ENCODE measurements at regions of chr17 and their contacts with region 1.

Region 1: DNA sequence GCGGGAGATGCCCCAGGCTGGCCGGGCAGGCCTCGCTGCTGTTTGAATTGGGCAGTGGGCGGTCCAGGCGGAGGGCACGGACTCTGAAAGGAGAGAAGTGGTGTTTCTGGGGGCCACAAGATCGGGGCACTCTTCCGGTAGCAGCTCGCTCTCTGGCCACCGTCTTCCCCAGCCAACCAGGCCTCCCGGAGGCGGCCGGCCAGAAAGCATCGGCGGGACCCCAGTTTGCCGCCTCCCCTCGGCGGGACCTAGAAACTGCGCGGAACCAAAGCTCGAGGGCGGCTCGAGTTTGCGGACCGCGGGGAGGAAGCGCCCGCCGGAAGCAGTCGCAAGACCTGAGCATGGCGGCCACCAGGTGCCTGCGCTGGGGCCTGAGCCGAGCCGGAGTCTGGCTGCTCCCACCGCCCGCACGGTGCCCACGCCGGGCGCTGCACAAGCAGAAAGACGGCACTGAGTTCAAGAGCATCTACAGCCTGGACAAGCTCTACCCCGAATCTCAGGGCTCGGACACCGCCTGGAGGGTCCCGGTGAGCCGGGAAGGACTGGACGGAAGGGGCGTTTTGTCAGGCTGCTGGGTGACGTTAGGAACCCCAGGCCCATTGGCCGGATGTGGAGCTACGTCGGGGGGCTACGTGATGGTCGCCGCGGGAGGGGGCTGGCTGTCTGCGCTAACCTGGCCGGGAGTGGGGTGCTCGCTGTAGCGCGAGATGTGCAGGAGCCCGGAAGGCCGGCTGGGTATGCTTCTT is at the start of gene MRPL58:
- DNase-seq: peak; percentile 62 to 90 (median 75)
- ATAC-seq: peak; percentile 97
- H3K4me3 ChIP-seq: peak within 1 kb of the TSS; percentile 95
- H3K4me3 Mint-ChIP-seq: peak within 1 kb of the TSS; percentile 96
- H3K27ac ChIP-seq: peak within 1 kb of the TSS; percentile 7 to 52
- H3K27ac Mint-ChIP-seq: peak within 1 kb of the TSS; percentile 85
- H3K4me1 ChIP-seq: peaks cover 18% of the 10 kb centered on the region
- H3K4me1 Mint-ChIP-seq: peaks cover 35% of the 10 kb centered on the region
- H3K27me3 ChIP-seq: no peaks in the 10 kb centered on the region
- H3K27me3 Mint-ChIP-seq: no peaks in the 10 kb centered on the region
- CTCF ChIP-seq: peak; percentile 75
- total RNA-seq, gene MRPL58: 5.4 to 7.1 TPM

Region 2: DNA sequence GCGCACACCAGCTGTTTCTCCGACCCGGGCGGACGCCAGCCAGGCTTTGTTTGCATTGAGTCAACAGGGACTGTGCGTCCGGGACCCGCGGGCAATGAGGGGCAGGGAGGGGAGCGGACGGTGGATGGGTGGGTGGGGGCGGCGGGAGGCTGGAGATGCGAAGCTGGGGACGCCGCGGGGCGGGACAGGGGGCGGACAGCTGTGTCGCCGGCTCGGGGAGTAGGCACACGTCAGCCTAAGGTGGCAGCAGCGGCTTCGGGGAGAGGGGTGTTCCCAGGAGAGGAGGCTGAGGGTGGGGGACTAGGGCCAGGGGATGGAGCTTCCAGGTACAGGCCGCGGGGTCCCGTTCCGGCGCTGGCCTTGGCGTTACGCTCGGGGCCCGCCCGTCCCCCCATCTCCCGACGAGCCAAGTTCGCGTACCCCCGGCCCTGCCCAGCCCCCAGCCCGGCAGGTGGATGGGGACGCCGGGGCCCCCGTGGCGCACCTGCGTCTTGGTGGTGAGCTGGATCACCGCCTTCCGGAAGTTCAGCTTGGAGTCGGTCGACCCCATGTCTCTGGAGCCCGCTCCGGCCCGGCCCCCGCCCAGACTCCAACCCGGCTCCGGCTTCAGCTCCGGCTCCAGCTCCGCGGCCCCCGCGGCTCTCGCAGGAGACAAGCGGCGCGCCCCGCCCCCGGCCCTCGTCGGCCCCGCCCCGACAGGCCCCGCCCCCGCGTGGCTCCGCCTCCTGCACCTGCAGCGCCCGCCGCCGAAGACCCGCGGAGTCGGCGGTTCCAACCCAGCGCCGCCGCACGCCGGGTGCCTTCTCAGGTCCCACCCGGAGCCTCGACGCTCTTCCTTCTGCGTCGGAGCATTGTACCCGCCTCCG is 40.2 kb before region 1 on chr17 and contains the start of gene HID1:
- CTCF ChIA-PET with region 1: interaction called, 8 read pairs
- POLR2A ChIA-PET with region 1: interaction called, 27 read pairs
- intact Hi-C with region 1: no loop called
- DNase-seq: peak; percentile 74 to 90 (median 81)
- ATAC-seq: peak; percentile 88
- H3K4me3 ChIP-seq: peak within 1 kb of the TSS; percentile 59
- H3K4me3 Mint-ChIP-seq: peak within 1 kb of the TSS; percentile 89
- H3K27ac ChIP-seq: no peak within 1 kb of the TSS
- H3K27ac Mint-ChIP-seq: peak within 1 kb of the TSS; percentile 55
- H3K4me1 ChIP-seq: peaks cover 21% of the 10 kb centered on the region
- H3K4me1 Mint-ChIP-seq: peaks cover 5% of the 10 kb centered on the region
- H3K27me3 ChIP-seq: peaks cover 4 to 14% of the 10 kb centered on the region in 2 experiments
- H3K27me3 Mint-ChIP-seq: peaks cover 4% of the 10 kb centered on the region
- CTCF ChIP-seq: no peak
- total RNA-seq, gene HID1: 31.8 to 31.9 TPM

Region 3: GRCh38 chr17:74981979-74982662 is 30.4 kb before region 1 on chr17:
- CTCF ChIA-PET with region 1: interaction called, 15 read pairs
- POLR2A ChIA-PET with region 1: interaction called, 26 read pairs
- intact Hi-C with region 1: loop called in 1 of 2 experiments (anchors 2 kb)
- DNase-seq: peak; percentile 61 to 93 (median 77)
- ATAC-seq: peak; percentile 91
- H3K4me3 ChIP-seq: peak overlapping the region; percentile 80
- H3K4me3 Mint-ChIP-seq: peak overlapping the region; percentile 91
- H3K27ac ChIP-seq: peak overlapping the region; percentile 53 to 71
- H3K27ac Mint-ChIP-seq: peak overlapping the region; percentile 89
- H3K4me1 ChIP-seq: peaks cover 26% of the 10 kb centered on the region
- H3K4me1 Mint-ChIP-seq: peaks cover 29% of the 10 kb centered on the region
- H3K27me3 ChIP-seq: no peaks in the 10 kb centered on the region
- H3K27me3 Mint-ChIP-seq: peaks cover 2% of the 10 kb centered on the region
- CTCF ChIP-seq: no peak

Region 4: GRCh38 chr17:74987418-74987908 is 25.1 kb before region 1 on chr17 and contains the start of gene CDR2L:
- CTCF ChIA-PET with region 1: interaction called, 15 read pairs
- POLR2A ChIA-PET with region 1: interaction called, 26 read pairs
- intact Hi-C with region 1: loop called in 1 of 2 experiments (anchors 2 kb)
- DNase-seq: peak; percentile 80 to 97 (median 90)
- ATAC-seq: peak; percentile 97
- H3K4me3 ChIP-seq: peak within 1 kb of the TSS; percentile 55
- H3K4me3 Mint-ChIP-seq: peak within 1 kb of the TSS; percentile 85
- H3K27ac ChIP-seq: no peak within 1 kb of the TSS
- H3K27ac Mint-ChIP-seq: peak within 1 kb of the TSS; percentile 19
- H3K4me1 ChIP-seq: peaks cover 21% of the 10 kb centered on the region
- H3K4me1 Mint-ChIP-seq: peaks cover 15% of the 10 kb centered on the region
- H3K27me3 ChIP-seq: peaks cover 7 to 9% of the 10 kb centered on the region in 2 experiments
- H3K27me3 Mint-ChIP-seq: peaks cover 4% of the 10 kb centered on the region
- CTCF ChIP-seq: no peak
- total RNA-seq, gene CDR2L: 0.08 TPM in 1 of 2 experiments, not detected in the other

Region 5: DNA sequence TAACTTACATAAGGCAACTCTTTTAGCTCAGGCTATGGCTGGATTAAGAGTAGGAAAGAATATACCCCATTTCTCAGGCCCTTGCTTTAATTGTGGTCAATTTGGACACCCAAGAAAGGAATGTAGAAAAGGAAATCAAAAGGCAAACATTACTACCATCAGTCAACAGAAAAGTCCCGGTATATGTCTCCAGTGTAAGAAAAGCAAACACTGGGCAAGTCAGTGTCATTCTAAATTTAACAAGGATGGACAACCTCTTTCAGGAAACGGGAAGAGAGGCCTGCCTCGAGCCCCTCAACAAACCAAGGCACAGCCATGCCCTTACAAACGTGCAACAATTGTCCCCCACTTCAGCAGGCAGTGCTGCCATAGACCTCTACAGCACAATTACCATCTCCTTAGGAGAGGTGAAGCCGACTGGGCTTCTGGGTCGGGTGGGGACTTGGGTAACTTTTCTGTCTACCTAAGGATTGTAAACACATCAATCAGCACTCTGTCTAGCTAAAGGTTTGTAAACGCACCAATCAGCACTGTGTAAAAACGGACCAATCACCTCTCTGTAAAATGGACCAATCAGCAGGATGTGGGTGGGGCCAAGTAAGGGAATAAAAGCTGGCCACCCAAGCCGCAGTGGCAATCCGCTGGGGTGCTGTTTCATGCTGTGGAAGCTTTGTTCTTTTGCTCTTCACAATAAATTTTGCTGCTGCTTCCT is 12.3 kb after region 1 on chr17:
- CTCF ChIA-PET with region 1: interaction called, 13 read pairs
- POLR2A ChIA-PET with region 1: interaction called, 14 read pairs
- intact Hi-C with region 1: no loop called
- DNase-seq: peak in 8 of 14 experiments; percentile 17 to 55 (median 36)
- ATAC-seq: peak; percentile 69
- H3K4me3 ChIP-seq: no peak overlapping the region
- H3K4me3 Mint-ChIP-seq: peak overlapping the region; percentile 56
- H3K27ac ChIP-seq: no peak overlapping the region
- H3K27ac Mint-ChIP-seq: peak overlapping the region; percentile 70
- H3K4me1 ChIP-seq: peaks cover 13% of the 10 kb centered on the region
- H3K4me1 Mint-ChIP-seq: peaks cover 32% of the 10 kb centered on the region
- H3K27me3 ChIP-seq: no peaks in the 10 kb centered on the region
- H3K27me3 Mint-ChIP-seq: no peaks in the 10 kb centered on the region
- CTCF ChIP-seq: no peak

Region 6: DNA sequence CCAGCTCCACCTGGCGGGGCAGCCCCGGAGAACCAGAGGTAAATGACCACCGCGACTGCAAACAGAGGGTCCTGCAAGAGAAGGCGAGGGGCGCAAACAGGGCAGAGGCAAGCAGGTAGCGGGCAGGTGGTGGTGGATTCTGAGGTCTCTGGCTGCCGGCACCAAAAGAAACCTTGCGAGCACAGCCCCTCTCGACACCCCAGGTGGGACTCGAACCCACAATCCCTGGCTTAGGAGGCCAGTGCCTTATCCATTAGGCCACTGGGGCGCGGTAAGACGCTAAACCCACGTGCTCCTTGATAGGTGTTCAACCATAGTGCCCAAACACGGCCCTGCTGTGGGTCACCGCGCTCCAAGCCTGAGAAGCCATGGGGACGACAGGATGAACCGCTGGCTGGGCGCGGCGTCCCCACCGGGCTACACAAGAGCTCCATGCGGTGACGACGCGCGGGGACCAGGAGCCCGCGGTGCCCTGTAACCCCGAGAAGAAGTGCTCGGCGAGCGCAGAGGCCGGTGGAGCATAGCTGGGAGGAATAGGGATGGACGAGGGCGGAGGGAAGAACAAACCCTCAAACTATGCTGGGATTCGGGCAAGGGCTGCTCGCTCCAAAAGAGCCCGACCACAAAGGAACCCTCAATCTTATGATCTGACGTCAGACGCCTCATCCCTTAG is 21.9 kb after region 1 on chr17:
- CTCF ChIA-PET with region 1: interaction called, 21 read pairs
- POLR2A ChIA-PET with region 1: interaction called, 61 read pairs
- intact Hi-C with region 1: loop called in 1 of 2 experiments (anchors 2 kb)
- DNase-seq: peak; percentile 55 to 88 (median 76)
- ATAC-seq: peak; percentile 12
- H3K4me3 ChIP-seq: peak overlapping the region; percentile 73
- H3K4me3 Mint-ChIP-seq: peak overlapping the region; percentile 92
- H3K27ac ChIP-seq: peak overlapping the region; percentile 26 to 46
- H3K27ac Mint-ChIP-seq: peak overlapping the region; percentile 98
- H3K4me1 ChIP-seq: peaks cover 56% of the 10 kb centered on the region
- H3K4me1 Mint-ChIP-seq: peaks cover 65% of the 10 kb centered on the region
- H3K27me3 ChIP-seq: no peaks in the 10 kb centered on the region
- H3K27me3 Mint-ChIP-seq: peaks cover 27% of the 10 kb centered on the region
- CTCF ChIP-seq: no peak

Measured in CD4-positive, alpha-beta T cell (primary cell).